CD4-positive, alpha-beta memory T cell (primary cell): ENCODE measurements at regions of chr2 and their contacts with region 1.

Region 1: DNA sequence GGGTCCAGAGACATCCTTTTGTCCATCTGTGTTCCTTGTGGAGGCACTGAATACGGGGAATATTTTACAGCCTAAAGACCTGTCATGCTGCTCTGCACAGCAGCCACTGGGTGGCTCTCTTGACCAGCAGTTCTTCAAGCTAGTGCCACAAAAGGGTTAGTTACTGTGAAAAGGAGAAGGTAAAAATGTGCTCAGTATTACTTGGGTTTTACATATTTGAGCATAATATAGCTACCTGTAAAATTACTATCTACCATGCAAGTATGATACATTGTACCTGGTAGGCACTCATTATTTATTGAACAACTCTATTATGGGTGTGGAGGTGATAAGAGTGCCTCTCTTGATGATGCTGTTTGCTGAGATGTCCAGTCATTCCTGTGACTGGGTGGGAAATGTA is 23.6 kb downstream of the FZD5 start:
- DNase-seq: peak; percentile 31 to 45 (median 37)
- H3K4me3 ChIP-seq: no peak overlapping the region
- H3K4me3 Mint-ChIP-seq: no peak overlapping the region
- H3K27ac ChIP-seq: no peak overlapping the region
- H3K27ac Mint-ChIP-seq: no peak overlapping the region
- H3K4me1 ChIP-seq: no peaks in the 10 kb centered on the region
- H3K4me1 Mint-ChIP-seq: no peaks in the 10 kb centered on the region
- H3K27me3 ChIP-seq: no peaks in the 10 kb centered on the region
- H3K27me3 Mint-ChIP-seq: no peaks in the 10 kb centered on the region

Region 2: DNA sequence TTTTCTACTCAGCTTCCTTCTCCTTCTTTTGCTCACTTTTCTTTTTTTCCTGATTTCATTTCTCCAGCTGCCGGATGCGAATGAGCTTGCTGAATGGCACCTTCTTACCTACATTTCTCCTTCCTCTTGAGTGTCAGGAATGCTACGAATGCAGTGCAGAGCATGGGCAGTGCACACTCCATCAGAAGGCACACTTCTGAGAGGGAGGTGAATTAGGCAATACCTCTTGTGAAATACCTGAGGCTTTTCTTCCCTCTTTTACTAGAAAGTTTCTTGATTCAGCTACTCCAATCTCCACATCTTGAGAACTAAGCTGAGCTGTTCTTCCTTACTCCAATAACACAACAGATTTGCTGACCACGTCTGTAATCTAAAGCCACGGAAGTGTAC is 228.1 kb after region 1 on chr2:
- CTCF ChIA-PET with region 1: interaction called, 18 read pairs
- POLR2A ChIA-PET with region 1: no interaction called
- intact Hi-C with region 1: loop called (anchors 2 kb)
- DNase-seq: no peak
- H3K4me3 ChIP-seq: no peak overlapping the region
- H3K4me3 Mint-ChIP-seq: no peak overlapping the region
- H3K27ac ChIP-seq: no peak overlapping the region
- H3K27ac Mint-ChIP-seq: no peak overlapping the region
- H3K4me1 ChIP-seq: no peaks in the 10 kb centered on the region
- H3K4me1 Mint-ChIP-seq: peaks cover 0 to 20% (median 5%) of the 10 kb centered on the region in 4 donors
- H3K27me3 ChIP-seq: no peaks in the 10 kb centered on the region
- H3K27me3 Mint-ChIP-seq: no peaks in the 10 kb centered on the region

Region 3: DNA sequence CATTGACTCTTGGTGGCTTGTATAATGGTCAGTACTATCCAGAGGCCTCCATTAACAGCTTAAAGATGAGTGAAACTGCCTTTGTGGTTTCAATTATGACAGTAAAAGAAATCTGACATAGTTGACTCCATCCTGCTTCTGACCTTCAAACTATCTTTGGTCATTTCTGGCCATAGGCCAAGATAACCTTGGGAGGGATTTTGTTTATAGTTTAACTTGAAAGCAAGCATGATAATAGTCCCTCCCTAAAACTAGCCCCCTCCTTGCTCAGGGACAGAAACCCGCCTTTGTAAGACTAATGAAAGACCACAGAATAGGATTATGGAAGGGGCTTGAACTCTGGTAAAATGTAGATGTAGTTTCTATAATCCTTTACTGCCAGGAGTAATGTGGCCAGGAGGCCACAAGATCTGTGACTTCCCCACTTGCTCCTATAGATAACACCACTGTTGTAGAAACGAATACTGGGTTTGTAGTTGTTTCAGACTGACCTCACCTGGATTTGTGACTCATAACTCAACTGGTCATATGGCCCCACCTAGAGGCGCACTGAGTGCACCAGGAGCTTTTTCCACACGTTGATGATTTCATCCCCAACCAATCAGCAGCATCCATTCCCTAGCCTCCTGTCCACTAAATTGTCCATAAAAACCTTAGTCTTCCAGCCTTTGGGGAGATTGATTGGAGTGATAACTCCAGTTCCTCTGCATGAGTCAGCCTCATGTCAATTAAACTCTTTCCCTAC is 287.8 kb after region 1 on chr2:
- CTCF ChIA-PET with region 1: interaction called, 50 read pairs
- POLR2A ChIA-PET with region 1: no interaction called
- intact Hi-C with region 1: no loop called
- DNase-seq: peak in 3 of 5 donors; percentile 12 to 23 (median 16)
- H3K4me3 ChIP-seq: no peak overlapping the region
- H3K4me3 Mint-ChIP-seq: no peak overlapping the region
- H3K27ac ChIP-seq: no peak overlapping the region
- H3K27ac Mint-ChIP-seq: no peak overlapping the region
- H3K4me1 ChIP-seq: no peaks in the 10 kb centered on the region
- H3K4me1 Mint-ChIP-seq: no peaks in the 10 kb centered on the region
- H3K27me3 ChIP-seq: no peaks in the 10 kb centered on the region
- H3K27me3 Mint-ChIP-seq: peaks cover 0 to 2% of the 10 kb centered on the region in 2 donors

Region 4: DNA sequence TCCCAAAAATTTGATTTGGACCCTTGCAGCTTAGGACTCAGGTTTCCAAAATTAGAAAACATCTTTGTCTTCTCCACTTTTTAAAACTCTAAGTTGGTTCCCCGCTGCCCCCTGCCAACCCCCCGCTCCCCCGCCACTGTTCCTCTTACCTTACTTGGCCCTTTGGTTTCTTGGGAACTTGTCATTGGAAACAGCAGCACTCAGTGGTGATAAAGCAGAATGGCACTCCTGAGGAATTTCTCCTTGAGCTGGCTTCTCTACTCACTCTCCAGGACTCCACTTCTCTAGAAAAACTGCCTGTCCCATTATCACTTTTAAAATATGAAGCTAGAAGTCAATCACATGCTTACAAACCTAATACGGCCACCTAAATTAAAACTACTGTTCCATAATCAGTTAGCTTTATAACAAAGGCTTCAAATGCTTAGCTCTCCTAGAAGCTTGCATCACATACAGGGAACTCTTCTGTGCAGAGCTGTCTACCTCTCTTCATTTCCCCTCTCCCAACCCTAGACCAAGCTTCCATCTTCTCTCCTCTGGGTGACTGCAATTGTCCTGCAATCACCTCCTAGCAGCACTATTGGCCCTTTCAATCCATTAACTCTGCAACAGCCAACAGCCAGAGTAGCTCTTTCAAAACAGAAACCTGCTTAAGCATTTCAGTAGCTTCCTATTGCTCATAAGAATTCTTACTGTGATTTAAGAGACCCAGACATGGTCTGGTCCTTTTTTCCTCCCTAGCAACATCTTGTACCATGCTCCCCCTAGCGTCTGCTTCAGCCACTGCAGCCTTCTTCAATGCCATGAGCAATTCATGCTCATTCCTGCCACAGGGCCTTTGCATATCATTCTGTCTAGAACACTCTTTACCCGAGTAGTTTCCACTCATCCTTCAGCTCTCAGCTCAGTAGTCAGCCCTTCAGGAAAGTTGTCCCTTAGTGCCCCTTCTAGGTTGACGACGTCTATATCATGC is 294.4 kb after region 1 on chr2:
- CTCF ChIA-PET with region 1: interaction called, 50 read pairs
- POLR2A ChIA-PET with region 1: no interaction called
- intact Hi-C with region 1: loop called (anchors 1 kb)
- DNase-seq: peak; percentile 37 to 58 (median 55)
- H3K4me3 ChIP-seq: no peak overlapping the region
- H3K4me3 Mint-ChIP-seq: no peak overlapping the region
- H3K27ac ChIP-seq: no peak overlapping the region
- H3K27ac Mint-ChIP-seq: peak overlapping the region in 3 of 7 donors; percentile 31 to 42 (median 42)
- H3K4me1 ChIP-seq: no peaks in the 10 kb centered on the region
- H3K4me1 Mint-ChIP-seq: no peaks in the 10 kb centered on the region
- H3K27me3 ChIP-seq: no peaks in the 10 kb centered on the region
- H3K27me3 Mint-ChIP-seq: peaks cover 0 to 2% of the 10 kb centered on the region in 2 donors

Region 5: GRCh38 chr2:208072250-208072892 is 326.2 kb after region 1 on chr2:
- CTCF ChIA-PET with region 1: interaction called, 34 read pairs
- POLR2A ChIA-PET with region 1: no interaction called
- intact Hi-C with region 1: loop called (anchors 1 kb)
- DNase-seq: peak; percentile 43 to 55 (median 47)
- H3K4me3 ChIP-seq: no peak overlapping the region
- H3K4me3 Mint-ChIP-seq: no peak overlapping the region
- H3K27ac ChIP-seq: no peak overlapping the region
- H3K27ac Mint-ChIP-seq: no peak overlapping the region
- H3K4me1 ChIP-seq: no peaks in the 10 kb centered on the region
- H3K4me1 Mint-ChIP-seq: no peaks in the 10 kb centered on the region
- H3K27me3 ChIP-seq: peaks cover 4% of the 10 kb centered on the region
- H3K27me3 Mint-ChIP-seq: peaks cover 7 to 16% of the 10 kb centered on the region in 2 donors

Region 6: DNA sequence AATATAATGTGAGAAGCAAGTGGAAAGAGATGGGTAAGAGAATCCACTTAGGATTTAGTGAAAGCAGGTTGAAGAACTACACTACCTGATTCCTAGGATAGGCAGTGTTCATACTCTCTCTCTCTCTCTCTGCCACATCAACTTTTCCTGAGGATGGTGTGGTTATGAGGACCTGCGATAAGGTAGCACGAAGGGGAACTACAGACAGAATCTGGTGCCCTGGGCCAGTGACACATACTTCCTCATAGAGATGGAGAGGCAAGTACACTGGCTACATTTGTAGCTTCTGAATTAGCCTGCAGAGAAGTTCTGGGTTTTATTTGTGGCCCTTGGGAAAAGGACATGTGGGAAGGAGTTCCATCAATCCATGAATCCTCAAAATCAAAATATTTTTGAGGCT is 704.9 kb after region 1 on chr2:
- CTCF ChIA-PET with region 1: no interaction called
- POLR2A ChIA-PET with region 1: no interaction called
- intact Hi-C with region 1: no loop called
- DNase-seq: no peak
- H3K4me3 ChIP-seq: no peak overlapping the region
- H3K4me3 Mint-ChIP-seq: no peak overlapping the region
- H3K27ac ChIP-seq: no peak overlapping the region
- H3K27ac Mint-ChIP-seq: no peak overlapping the region
- H3K4me1 ChIP-seq: no peaks in the 10 kb centered on the region
- H3K4me1 Mint-ChIP-seq: no peaks in the 10 kb centered on the region
- H3K27me3 ChIP-seq: no peaks in the 10 kb centered on the region
- H3K27me3 Mint-ChIP-seq: no peaks in the 10 kb centered on the region